ENCODE measurements at regions of chr4 and their contacts with region 1.

Region 1: DNA sequence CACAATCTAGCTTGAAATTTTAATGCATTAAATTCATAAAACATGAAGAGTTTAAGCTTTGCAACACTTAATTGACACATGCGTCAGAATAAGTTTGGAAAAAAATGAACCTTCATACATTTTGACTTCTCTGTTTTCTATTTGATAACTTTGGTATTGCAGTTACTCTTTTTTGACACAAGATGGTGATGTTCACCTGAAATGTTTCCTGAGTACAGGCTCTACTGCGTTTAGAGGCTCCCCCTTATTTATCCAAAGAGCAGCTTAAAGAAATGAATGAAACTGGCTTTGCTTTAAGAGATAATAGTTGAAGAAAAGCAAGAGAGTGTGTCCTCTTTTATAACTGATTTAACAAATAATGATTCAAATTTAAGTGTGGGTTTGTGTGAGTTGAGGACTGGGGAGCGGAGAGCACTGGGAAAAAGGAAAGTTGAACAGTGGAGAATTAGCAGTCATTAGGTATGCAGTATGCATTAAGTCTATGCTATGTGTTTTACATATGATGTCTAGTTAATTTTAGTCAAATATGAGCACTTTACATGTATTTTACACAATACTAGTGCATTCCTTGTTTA is 180.6 kb upstream of the NUDT6 start:
- DNase-seq: peak; percentile 52
- H3K4me3 ChIP-seq: no peak overlapping the region
- H3K27ac ChIP-seq: no peak overlapping the region
- H3K4me1 ChIP-seq: no peaks in the 10 kb centered on the region
- H3K27me3 ChIP-seq: no peaks in the 10 kb centered on the region
- CTCF ChIP-seq: peak; percentile 37 to 44
- POLR2A ChIP-seq: no peak

Region 2: GRCh38 chr4:123564758-123565346 is 461.9 kb after region 1 on chr4:
- CTCF ChIA-PET with region 1: interaction called, 11 read pairs
- POLR2A ChIA-PET with region 1: no interaction called
- dilution Hi-C with region 1: no loop called
- intact Hi-C with region 1: loop called (anchors 2 kb)
- DNase-seq: peak; percentile 74
- H3K4me3 ChIP-seq: no peak overlapping the region
- H3K27ac ChIP-seq: no peak overlapping the region
- H3K4me1 ChIP-seq: peaks cover 5% of the 10 kb centered on the region
- H3K27me3 ChIP-seq: peaks cover 2 to 5% of the 10 kb centered on the region in 2 experiments
- CTCF ChIP-seq: peak; percentile 81 to 84
- POLR2A ChIP-seq: no peak

Region 3: GRCh38 chr4:123767806-123768205 is 664.8 kb after region 1 on chr4:
- CTCF ChIA-PET with region 1: interaction called, 7 read pairs
- POLR2A ChIA-PET with region 1: no interaction called
- dilution Hi-C with region 1: no loop called
- intact Hi-C with region 1: loop called (anchors 10 kb)
- DNase-seq: no peak
- H3K4me3 ChIP-seq: no peak overlapping the region
- H3K27ac ChIP-seq: no peak overlapping the region
- H3K4me1 ChIP-seq: no peaks in the 10 kb centered on the region
- H3K27me3 ChIP-seq: no peaks in the 10 kb centered on the region
- CTCF ChIP-seq: no peak
- POLR2A ChIP-seq: no peak

Region 4: DNA sequence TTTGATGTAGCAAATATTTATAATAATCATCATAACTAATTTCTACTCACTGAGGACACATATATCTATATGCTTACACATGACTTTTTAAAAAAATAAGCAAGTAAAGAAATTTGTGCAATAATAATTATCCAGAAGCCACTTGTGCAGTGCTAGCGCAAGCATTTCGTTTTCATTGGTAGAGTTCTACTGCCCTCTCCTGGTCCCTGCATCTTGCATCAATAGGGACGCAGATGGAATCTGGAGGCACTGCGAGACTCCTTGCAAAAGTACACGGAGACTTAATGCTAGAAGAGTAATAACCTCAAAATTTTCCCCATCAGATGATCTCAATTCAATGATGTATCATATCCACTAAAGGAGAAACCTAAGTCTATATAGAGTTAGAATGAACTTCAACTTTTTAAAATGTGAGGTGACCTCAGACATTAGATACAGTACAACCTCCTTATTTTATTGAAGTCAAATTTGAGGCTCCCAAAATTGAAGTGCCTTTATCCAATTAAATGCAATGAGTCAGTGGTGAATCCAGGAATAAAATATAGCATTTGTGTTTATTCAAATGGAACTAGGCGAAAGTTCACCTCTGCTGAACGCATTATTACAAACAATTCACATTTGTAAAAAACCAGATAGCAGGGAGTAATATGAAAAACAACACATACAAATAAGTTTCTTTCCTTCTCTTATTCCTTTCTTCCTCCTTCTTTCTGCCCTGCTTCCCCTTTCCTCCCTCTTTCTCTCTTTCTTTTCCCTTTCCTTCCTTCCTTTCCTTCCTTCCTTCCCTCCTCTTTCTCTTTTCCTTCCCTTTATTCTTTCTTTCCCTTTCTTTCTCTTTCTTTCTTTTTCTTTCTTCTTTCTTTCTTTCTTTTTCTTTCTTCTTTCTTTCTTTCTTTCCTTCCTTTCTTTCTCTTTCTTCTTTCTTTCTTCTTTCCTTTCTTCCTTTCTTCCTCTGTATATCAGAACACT is 1159.5 kb after region 1 on chr4:
- CTCF ChIA-PET with region 1: interaction called, 9 read pairs
- POLR2A ChIA-PET with region 1: no interaction called
- dilution Hi-C with region 1: no loop called
- intact Hi-C with region 1: loop called (anchors 1 kb)
- DNase-seq: peak; percentile 86
- H3K4me3 ChIP-seq: no peak overlapping the region
- H3K27ac ChIP-seq: no peak overlapping the region
- H3K4me1 ChIP-seq: no peaks in the 10 kb centered on the region
- H3K27me3 ChIP-seq: no peaks in the 10 kb centered on the region
- CTCF ChIP-seq: peak; percentile 70 to 87
- POLR2A ChIP-seq: no peak

Region 5: DNA sequence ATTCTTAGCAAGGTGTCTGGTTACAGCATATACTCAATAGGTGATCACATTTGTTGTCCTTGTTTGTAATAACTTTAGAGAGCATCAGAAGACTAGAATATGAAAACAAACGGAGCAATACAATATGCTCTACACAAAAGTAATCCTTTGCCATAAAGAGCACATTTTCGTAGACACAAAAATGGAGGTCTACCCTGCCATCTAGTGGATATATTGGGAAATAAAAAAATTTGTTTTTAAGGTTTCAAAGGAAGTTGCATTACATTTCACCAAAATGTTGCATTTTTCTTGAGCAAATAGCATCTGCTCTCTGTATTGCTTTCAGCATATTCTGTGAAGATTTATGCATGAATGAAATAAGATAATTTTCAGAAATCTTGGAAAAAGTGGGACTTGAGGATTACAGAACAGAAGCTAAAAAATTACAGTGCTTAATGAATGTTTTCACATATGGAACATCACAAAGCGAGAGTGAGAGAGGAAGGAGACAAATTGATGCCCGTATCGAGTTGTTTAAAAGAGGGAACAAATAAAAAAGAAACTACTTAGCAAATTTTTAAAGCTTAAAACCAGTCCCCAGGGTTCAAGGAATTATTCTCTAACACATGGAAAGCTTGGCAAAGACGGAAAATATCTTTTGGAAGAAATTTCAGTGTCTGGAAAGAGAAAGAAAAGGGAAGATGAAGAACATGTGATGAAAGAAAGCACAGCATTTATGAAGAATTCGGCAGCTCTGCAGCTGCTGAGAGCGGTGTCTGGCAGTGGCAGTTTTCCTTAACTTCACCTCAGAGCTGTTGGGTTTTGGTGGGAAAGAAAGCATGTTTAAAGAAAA is 1219.5 kb after region 1 on chr4:
- CTCF ChIA-PET with region 1: interaction called, 9 read pairs
- POLR2A ChIA-PET with region 1: no interaction called
- dilution Hi-C with region 1: no loop called
- intact Hi-C with region 1: loop called (anchors 5 kb)
- DNase-seq: peak; percentile 56
- H3K4me3 ChIP-seq: no peak overlapping the region
- H3K27ac ChIP-seq: no peak overlapping the region
- H3K4me1 ChIP-seq: no peaks in the 10 kb centered on the region
- H3K27me3 ChIP-seq: no peaks in the 10 kb centered on the region
- CTCF ChIP-seq: peak; percentile 14 to 25
- POLR2A ChIP-seq: no peak

Measured in endothelial cell of umbilical vein (primary cell).